ENCODE measurements at regions of chr11 and their contacts with region 1.

Region 1: DNA sequence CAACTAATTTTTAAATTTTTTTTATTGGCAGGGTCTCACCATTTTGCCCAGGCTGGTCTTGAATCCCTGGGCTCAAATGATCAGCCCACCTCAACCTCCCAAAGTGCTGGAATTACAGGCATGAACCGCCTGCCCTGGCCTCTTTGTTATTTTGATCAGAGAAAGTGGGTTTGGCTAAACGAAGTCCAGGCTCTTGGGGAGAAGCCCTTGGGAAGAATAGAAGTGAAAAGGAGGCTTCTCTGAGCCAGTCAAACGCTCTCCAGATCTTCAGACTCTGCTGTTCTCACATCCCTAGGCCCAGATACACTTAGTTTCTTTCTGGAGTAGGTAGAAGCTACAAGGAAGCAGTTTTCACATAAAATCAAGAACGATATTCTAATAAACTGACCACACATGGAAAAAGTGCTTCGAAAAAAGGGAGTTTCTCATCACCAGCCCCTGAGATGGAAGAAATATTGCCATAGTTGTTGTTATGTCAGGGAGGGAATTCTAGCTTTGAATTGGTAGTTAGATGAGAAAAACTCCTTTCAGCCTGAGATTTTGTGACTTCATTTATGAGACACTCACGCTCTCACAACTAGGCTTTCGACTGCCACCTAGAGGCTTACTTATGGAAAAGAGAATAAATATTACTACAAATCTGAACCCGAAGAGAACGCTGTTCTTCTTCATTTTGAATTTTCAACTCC is 41.7 kb upstream of the AQP11 start:
- DNase-seq: peak; percentile 39 to 57
- H3K4me3 ChIP-seq: no peak overlapping the region
- H3K27ac ChIP-seq: no peak overlapping the region
- H3K4me1 ChIP-seq: no peaks in the 10 kb centered on the region
- H3K27me3 ChIP-seq: no peaks in the 10 kb centered on the region
- CTCF ChIP-seq: peak; percentile 90

Region 2: DNA sequence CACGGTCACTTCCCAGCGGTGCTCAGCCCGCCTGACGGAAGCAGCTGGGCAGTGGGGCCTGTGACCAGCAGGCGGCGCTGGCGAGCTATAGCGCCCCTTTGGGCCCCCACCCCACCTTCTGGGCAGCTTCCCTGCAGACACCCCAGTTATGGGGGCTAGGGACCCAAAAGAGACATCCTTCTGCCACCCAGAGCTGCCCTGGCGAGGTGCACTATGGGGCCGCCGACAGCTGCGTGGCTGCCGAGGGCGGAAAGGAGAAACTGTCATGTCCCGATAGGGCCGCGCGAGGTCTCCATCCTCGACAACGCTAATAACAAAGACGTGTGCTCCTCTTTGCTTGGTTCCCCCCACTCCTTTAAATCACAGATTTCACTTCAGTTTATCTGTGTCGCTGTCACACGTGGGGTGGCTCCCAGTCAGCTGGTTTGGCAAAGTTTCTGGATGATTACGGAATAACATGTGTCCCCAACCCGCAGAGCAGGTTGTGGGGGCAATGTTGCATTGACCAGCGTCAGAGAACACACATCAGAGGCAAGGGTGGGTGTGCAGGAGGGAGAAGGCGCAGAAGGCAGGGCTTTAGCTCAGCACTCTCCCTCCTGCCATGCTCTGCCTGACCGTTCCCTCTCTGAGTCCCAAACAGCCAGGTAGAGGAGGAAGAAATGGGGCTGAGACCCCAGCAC is 420.6 kb before region 1 on chr11:
- CTCF ChIA-PET with region 1: interaction called, 3 read pairs
- POLR2A ChIA-PET with region 1: no interaction called
- intact Hi-C with region 1: loop called (anchors 2 kb)
- DNase-seq: peak in 1 of 2 experiments; percentile 59
- H3K4me3 ChIP-seq: peak overlapping the region; percentile 44; the same call in 1 of the 2 replicates
- H3K27ac ChIP-seq: no peak overlapping the region
- H3K4me1 ChIP-seq: no peaks in the 10 kb centered on the region
- H3K27me3 ChIP-seq: no peaks in the 10 kb centered on the region
- CTCF ChIP-seq: peak; percentile 98

Region 3: GRCh38 chr11:77198440-77198849 is 349.6 kb before region 1 on chr11:
- CTCF ChIA-PET with region 1: interaction called, 26 read pairs
- POLR2A ChIA-PET with region 1: no interaction called
- intact Hi-C with region 1: no loop called
- DNase-seq: no peak
- H3K4me3 ChIP-seq: no peak overlapping the region
- H3K27ac ChIP-seq: no peak overlapping the region
- H3K4me1 ChIP-seq: no peaks in the 10 kb centered on the region
- H3K27me3 ChIP-seq: no peaks in the 10 kb centered on the region
- CTCF ChIP-seq: peak; percentile 60

Region 4: DNA sequence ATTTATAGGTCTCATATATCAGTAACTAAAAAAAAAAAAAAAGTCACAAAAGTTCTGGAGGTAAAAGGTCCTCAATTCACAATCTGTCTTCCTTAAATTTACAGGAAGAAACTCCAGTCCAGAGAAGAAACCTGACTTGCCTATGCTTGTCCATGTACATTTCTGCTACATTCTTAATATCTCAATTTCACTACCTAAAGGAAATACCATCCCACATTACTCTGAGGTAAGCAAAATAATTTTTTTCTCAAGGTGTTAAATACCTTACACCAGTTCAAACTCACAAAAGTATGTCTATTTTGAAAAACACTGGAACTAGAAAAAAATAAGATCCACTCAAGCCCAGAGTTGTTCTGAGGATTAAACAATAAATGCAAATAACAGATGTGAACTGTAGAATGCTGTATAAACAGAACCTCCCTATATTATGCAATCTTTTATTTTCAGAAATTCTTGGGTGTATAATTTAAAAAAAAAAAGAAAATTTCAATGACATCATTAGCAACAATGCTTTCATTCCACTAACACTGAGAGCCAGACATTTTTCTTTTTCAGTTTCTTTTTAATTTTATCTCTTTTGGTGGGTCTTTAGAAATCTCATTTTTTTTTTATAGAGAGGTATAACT is 196.6 kb before region 1 on chr11:
- CTCF ChIA-PET with region 1: no interaction called
- POLR2A ChIA-PET with region 1: no interaction called
- intact Hi-C with region 1: loop called (anchors 10 kb)
- DNase-seq: no peak
- H3K4me3 ChIP-seq: no peak overlapping the region
- H3K27ac ChIP-seq: no peak overlapping the region
- H3K4me1 ChIP-seq: no peaks in the 10 kb centered on the region
- H3K27me3 ChIP-seq: no peaks in the 10 kb centered on the region
- CTCF ChIP-seq: no peak

Region 5: GRCh38 chr11:77473801-77474683 is 74.0 kb before region 1 on chr11 and contains the start of gene PAK1:
- CTCF ChIA-PET with region 1: no interaction called
- POLR2A ChIA-PET with region 1: no interaction called
- intact Hi-C with region 1: loop called (anchors 1 kb)
- DNase-seq: peak; percentile 83 to 93
- H3K4me3 ChIP-seq: peak within 1 kb of the TSS; percentile 83
- H3K27ac ChIP-seq: peak within 1 kb of the TSS; percentile 18
- H3K4me1 ChIP-seq: peaks cover 36% of the 10 kb centered on the region
- H3K27me3 ChIP-seq: no peaks in the 10 kb centered on the region
- CTCF ChIP-seq: peak; percentile 43
- total RNA-seq, gene PAK1: 80.0 and 109 TPM in 2 replicates

Region 6: GRCh38 chr11:77619576-77620198 is 71.7 kb after region 1 on chr11:
- CTCF ChIA-PET with region 1: no interaction called
- POLR2A ChIA-PET with region 1: no interaction called
- intact Hi-C with region 1: loop called (anchors 2 kb)
- DNase-seq: peak; percentile 29 to 56
- H3K4me3 ChIP-seq: no peak overlapping the region
- H3K27ac ChIP-seq: no peak overlapping the region
- H3K4me1 ChIP-seq: no peaks in the 10 kb centered on the region
- H3K27me3 ChIP-seq: no peaks in the 10 kb centered on the region
- CTCF ChIP-seq: peak; percentile 96

Measured in PC-9 (cell line).